Calu3 (cell line): ENCODE measurements at regions of chr18 and their contacts with region 1.

Region 1: GRCh38 chr18:66749030-66749429 is 145.1 kb upstream of the CDH19 start:
- DNase-seq: peak; percentile 34
- H3K4me3 Mint-ChIP-seq: no peak overlapping the region
- H3K27ac Mint-ChIP-seq: no peak overlapping the region
- H3K4me1 Mint-ChIP-seq: peaks cover 25% of the 10 kb centered on the region
- H3K27me3 Mint-ChIP-seq: no peaks in the 10 kb centered on the region
- CTCF ChIP-seq: no peak

Region 2: GRCh38 chr18:65938592-65939372 is 810.2 kb before region 1 on chr18:
- CTCF ChIA-PET with region 1: no interaction called
- intact Hi-C with region 1: loop called (anchors 2 kb)
- DNase-seq: peak; percentile 43
- H3K4me3 Mint-ChIP-seq: no peak overlapping the region
- H3K27ac Mint-ChIP-seq: no peak overlapping the region
- H3K4me1 Mint-ChIP-seq: peaks cover 18% of the 10 kb centered on the region
- H3K27me3 Mint-ChIP-seq: no peaks in the 10 kb centered on the region
- CTCF ChIP-seq: no peak

Region 3: GRCh38 chr18:66655407-66655806 is 93.6 kb before region 1 on chr18:
- CTCF ChIA-PET with region 1: no interaction called
- intact Hi-C with region 1: no loop called
- DNase-seq: no peak
- H3K4me3 Mint-ChIP-seq: no peak overlapping the region
- H3K27ac Mint-ChIP-seq: no peak overlapping the region
- H3K4me1 Mint-ChIP-seq: no peaks in the 10 kb centered on the region
- H3K27me3 Mint-ChIP-seq: no peaks in the 10 kb centered on the region
- CTCF ChIP-seq: no peak

Region 4: DNA sequence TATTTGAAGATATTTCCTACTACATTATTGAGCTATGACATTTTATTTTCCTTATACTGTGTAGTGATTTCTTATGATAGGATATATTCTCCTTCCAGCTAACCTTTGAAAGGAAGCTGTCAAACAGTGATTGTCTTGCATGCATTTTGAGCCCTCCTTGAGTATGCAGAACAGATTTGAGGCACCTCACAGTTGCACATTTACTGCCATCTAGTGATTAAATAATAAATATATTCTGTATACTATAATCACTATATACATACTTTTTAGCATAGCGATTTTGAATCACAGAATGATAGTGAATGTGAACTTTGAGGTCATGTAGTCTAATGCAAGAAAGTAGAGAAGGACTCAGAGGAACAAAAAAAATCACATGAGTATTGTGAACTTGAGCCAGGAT is 123.2 kb after region 1 on chr18:
- CTCF ChIA-PET with region 1: no interaction called
- intact Hi-C with region 1: loop called (anchors 10 kb)
- DNase-seq: no peak
- H3K4me3 Mint-ChIP-seq: no peak overlapping the region
- H3K27ac Mint-ChIP-seq: no peak overlapping the region
- H3K4me1 Mint-ChIP-seq: peaks cover 13% of the 10 kb centered on the region
- H3K27me3 Mint-ChIP-seq: no peaks in the 10 kb centered on the region
- CTCF ChIP-seq: no peak